PC-3 (cell line): ENCODE measurements at regions of chr4 and their contacts with region 1.

Region 1: DNA sequence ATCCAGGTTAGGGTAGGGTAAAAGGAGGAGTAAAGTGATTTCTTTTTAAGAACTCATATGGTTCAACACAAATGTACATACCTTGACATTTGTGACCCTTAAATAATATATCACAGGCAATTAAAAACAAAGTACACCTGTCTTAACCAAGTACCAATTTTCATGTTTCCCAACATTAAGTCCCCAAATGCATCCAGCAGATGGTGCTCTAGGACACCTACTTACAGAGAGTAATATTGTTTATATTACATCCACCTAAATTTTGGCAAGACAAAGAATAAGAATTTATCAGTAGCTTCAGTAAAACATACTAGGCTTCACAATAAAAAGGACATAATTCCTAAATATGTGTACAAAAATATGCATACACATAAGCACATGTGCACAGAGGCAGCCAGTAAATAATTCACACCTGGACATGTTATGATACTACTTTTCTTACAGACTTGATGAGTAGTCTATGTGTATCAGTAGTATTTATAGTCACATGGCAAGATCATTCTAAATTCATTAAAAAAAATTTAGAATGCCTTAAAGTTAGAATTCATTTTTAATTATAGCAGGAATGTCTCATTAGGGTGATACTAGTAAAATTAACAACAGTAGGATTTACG is 219.7 kb downstream of the DCLK2 start:
- DNase-seq: peak; percentile 76
- ATAC-seq: 0 out of 2 replicates have a peak, but pooled peaks have one; percentile 46
- H3K4me3 ChIP-seq: no peak overlapping the region
- H3K27ac ChIP-seq: no peak overlapping the region
- H3K4me1 ChIP-seq: peaks cover 15% of the 10 kb centered on the region
- H3K27me3 ChIP-seq: no peaks in the 10 kb centered on the region
- CTCF ChIP-seq: peak; percentile 79

Region 2: DNA sequence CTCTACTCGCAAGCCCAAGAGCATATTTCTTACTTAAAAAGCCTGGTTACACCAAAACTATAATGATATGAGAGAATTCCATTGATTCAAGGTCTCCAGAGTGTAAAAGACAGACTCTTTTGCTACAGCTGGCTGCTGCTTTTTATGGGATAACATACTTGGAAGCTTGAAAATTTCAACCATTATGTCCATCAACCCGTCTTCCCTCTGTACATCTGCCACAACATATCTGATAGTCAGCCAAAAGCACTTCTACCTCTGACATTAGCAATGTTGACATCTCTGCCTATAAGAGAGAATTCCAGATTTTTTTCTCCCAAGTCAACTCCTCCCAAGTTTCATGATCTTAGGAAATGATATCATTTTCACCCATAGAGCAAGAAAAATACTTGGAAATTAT is 428.0 kb before region 1 on chr4:
- CTCF ChIA-PET with region 1: no interaction called
- POLR2A ChIA-PET with region 1: no interaction called
- intact Hi-C with region 1: no loop called
- DNase-seq: no peak
- ATAC-seq: no peak
- H3K4me3 ChIP-seq: no peak overlapping the region
- H3K27ac ChIP-seq: no peak overlapping the region
- H3K4me1 ChIP-seq: no peaks in the 10 kb centered on the region
- H3K27me3 ChIP-seq: no peaks in the 10 kb centered on the region
- CTCF ChIP-seq: no peak

Region 3: GRCh38 chr4:150280081-150280895 is 17.7 kb before region 1 on chr4:
- CTCF ChIA-PET with region 1: no interaction called
- POLR2A ChIA-PET with region 1: no interaction called
- intact Hi-C with region 1: no loop called
- DNase-seq: peak; percentile 28
- ATAC-seq: peak; percentile 69
- H3K4me3 ChIP-seq: no peak overlapping the region
- H3K27ac ChIP-seq: no peak overlapping the region
- H3K4me1 ChIP-seq: peaks cover 12% of the 10 kb centered on the region
- H3K27me3 ChIP-seq: no peaks in the 10 kb centered on the region
- CTCF ChIP-seq: no peak

Region 4: GRCh38 chr4:150348079-150348478 is 50.1 kb after region 1 on chr4:
- CTCF ChIA-PET with region 1: no interaction called
- POLR2A ChIA-PET with region 1: no interaction called
- intact Hi-C with region 1: loop called (anchors 2 kb)
- DNase-seq: peak; percentile 89
- ATAC-seq: peak; percentile 99
- H3K4me3 ChIP-seq: no peak overlapping the region
- H3K27ac ChIP-seq: peak overlapping the region; percentile 33; the same call in 1 of the 2 replicates
- H3K4me1 ChIP-seq: peaks cover 5% of the 10 kb centered on the region
- H3K27me3 ChIP-seq: no peaks in the 10 kb centered on the region
- CTCF ChIP-seq: no peak

Region 5: DNA sequence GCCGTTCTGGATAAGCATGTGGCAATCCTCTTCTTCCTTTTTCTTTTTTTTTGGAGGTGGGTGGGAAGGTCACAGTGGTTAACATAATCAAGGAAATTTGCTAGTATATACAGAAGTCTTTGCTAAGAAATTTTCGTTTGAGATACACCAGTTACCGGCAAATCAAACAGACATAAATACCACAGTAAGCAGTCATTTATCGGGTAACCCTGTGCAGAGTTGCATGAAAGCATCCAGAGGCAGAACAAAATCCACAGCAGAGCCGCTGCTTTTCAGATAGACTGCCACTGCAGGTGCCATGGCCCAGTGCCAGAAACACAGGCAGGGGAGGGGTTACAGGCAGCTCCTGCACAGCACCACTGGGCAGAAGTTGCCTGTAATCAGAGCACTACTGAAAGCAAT is 104.9 kb after region 1 on chr4:
- CTCF ChIA-PET with region 1: no interaction called
- POLR2A ChIA-PET with region 1: no interaction called
- intact Hi-C with region 1: no loop called
- DNase-seq: no peak
- ATAC-seq: no peak
- H3K4me3 ChIP-seq: no peak overlapping the region
- H3K27ac ChIP-seq: no peak overlapping the region
- H3K4me1 ChIP-seq: no peaks in the 10 kb centered on the region
- H3K27me3 ChIP-seq: no peaks in the 10 kb centered on the region
- CTCF ChIP-seq: no peak

Region 6: DNA sequence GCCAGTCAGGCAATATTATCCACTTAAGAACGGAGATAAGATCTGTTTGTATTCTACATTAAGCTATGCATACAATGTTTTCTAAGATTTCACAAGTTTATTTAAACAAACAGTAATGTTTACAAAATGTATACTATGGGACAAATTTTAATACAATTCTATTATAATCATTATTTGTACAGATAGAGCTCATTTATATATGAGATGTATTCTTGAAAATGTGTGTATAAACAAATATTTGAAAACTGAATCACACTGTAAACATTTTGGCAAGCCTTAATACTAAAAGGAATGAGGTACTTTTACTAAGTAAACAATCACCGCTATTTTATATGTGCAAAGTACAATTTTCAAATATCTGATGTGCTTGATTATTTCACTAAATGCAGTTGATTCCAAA is 164.8 kb after region 1 on chr4:
- CTCF ChIA-PET with region 1: no interaction called
- POLR2A ChIA-PET with region 1: no interaction called
- intact Hi-C with region 1: loop called (anchors 5 kb)
- DNase-seq: peak; percentile 73
- ATAC-seq: peak; percentile 83
- H3K4me3 ChIP-seq: no peak overlapping the region; the same call in 1 of the 2 replicates
- H3K27ac ChIP-seq: no peak overlapping the region
- H3K4me1 ChIP-seq: peaks cover 20% of the 10 kb centered on the region
- H3K27me3 ChIP-seq: no peaks in the 10 kb centered on the region
- CTCF ChIP-seq: no peak

Region 7: DNA sequence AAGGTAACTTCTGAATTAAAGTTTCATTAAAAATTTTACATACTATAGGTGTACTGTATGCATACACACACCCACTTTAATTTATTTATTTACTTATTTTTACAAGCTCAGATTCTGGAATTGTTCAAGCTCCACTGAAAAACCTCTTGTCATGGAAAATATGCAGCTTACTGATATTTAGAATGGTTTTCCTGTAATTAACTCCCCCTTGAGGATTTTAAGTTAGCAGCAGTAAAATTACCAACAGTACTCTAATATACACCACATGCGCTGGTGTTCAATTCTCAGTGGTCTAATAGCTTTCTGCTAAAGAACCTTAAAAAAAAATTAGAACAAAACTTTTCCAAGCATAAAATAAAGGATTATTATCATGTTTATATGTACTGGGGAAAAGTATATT is 296.0 kb after region 1 on chr4:
- CTCF ChIA-PET with region 1: no interaction called
- POLR2A ChIA-PET with region 1: no interaction called
- intact Hi-C with region 1: loop called (anchors 1 kb)
- DNase-seq: peak; percentile 25
- ATAC-seq: peak; percentile 51
- H3K4me3 ChIP-seq: no peak overlapping the region
- H3K27ac ChIP-seq: no peak overlapping the region
- H3K4me1 ChIP-seq: no peaks in the 10 kb centered on the region
- H3K27me3 ChIP-seq: no peaks in the 10 kb centered on the region
- CTCF ChIP-seq: peak; percentile 52

Region 8: GRCh38 chr4:150867148-150867547 is 569.2 kb after region 1 on chr4:
- CTCF ChIA-PET with region 1: interaction called, 7 read pairs
- POLR2A ChIA-PET with region 1: no interaction called
- intact Hi-C with region 1: loop called (anchors 2 kb)
- DNase-seq: peak; percentile 88
- ATAC-seq: peak; percentile 57
- H3K4me3 ChIP-seq: no peak overlapping the region
- H3K27ac ChIP-seq: no peak overlapping the region
- H3K4me1 ChIP-seq: no peaks in the 10 kb centered on the region
- H3K27me3 ChIP-seq: no peaks in the 10 kb centered on the region
- CTCF ChIP-seq: peak; percentile 66